Upper lobe of right lung (tissue), 1 donor: ENCODE measurements at regions of chr1 and their contacts with region 1.

Region 1: DNA sequence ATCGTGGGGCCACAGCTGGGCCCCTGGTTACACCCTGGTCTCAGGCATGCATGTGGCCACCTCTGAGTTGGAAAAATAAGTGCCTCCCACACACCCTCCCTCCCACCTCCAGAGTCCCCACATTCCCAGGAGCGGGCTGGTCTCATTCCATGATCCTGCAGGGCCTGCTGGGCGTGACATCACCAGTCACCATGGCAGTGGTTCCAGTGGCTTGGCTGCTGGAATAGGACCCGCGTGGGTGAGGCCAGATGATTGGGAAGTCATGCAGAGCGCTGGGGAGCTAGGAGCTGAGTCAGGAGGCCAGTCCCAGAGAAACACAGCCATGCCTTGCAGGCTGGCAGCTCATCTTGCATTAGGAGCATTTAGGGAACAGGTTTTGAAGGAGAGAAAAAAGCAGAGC is 125.4 kb upstream of the TMEM51 start:
- DNase-seq: no peak
- ATAC-seq: peak; percentile 62
- H3K4me3 ChIP-seq: no peak overlapping the region
- H3K27ac ChIP-seq: peak overlapping the region; percentile 32
- H3K4me1 ChIP-seq: peaks cover 11% of the 10 kb centered on the region
- H3K27me3 ChIP-seq: no peaks in the 10 kb centered on the region
- CTCF ChIP-seq: no peak

Region 2: DNA sequence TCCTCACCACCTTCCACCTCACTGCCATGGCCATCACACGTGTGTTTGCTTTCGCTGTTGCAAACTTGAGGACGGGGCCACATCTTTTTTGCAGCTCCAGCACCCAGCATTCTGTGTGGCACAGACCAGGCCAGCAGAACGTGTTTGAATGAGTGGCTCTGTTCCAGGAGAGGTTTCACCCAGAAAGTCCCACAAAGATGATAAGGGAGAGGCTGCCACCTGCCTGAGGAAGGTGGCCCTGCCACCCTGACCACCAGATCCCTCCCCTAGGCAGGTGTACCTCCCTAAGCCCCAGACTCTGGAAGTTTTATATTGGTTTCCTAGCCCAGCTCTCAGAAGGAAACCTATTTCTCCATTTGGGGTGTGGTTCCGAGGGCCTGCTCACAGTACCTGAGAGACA is 177.5 kb before region 1 on chr1:
- intact Hi-C with region 1: no loop called
- DNase-seq: no peak
- ATAC-seq: peak; percentile 11
- H3K4me3 ChIP-seq: no peak overlapping the region
- H3K27ac ChIP-seq: no peak overlapping the region
- H3K4me1 ChIP-seq: no peaks in the 10 kb centered on the region
- H3K27me3 ChIP-seq: no peaks in the 10 kb centered on the region
- CTCF ChIP-seq: no peak

Region 3: GRCh38 chr1:14923727-14924452 is 104.2 kb before region 1 on chr1:
- intact Hi-C with region 1: loop called (anchors 10 kb)
- DNase-seq: peak; percentile 91
- ATAC-seq: peak; percentile 89
- H3K4me3 ChIP-seq: peak overlapping the region; percentile 35
- H3K27ac ChIP-seq: peak overlapping the region; percentile 51
- H3K4me1 ChIP-seq: peaks cover 22% of the 10 kb centered on the region
- H3K27me3 ChIP-seq: no peaks in the 10 kb centered on the region
- CTCF ChIP-seq: no peak